GM12878 (cell line): ENCODE measurements at regions of chr22 and their contacts with region 1.

Region 1: GRCh38 chr22:23385291-23386244 is 194.5 kb downstream of the IGLL1 start:
- DNase-seq: peak; percentile 36
- ATAC-seq: peak; percentile 97
- H3K4me3 ChIP-seq: no peak overlapping the region
- H3K27ac ChIP-seq: no peak overlapping the region
- H3K4me1 ChIP-seq: no peaks in the 10 kb centered on the region
- H3K27me3 ChIP-seq: no peaks in the 10 kb centered on the region
- CTCF ChIP-seq: peak; percentile 95 to 97 (median 97); a peak in 5 of 6 replicates
- EP300 ChIP-seq: no peak
- POLR2A ChIP-seq: no peak
- RAD21 ChIP-seq: peak; percentile 96

Region 2: DNA sequence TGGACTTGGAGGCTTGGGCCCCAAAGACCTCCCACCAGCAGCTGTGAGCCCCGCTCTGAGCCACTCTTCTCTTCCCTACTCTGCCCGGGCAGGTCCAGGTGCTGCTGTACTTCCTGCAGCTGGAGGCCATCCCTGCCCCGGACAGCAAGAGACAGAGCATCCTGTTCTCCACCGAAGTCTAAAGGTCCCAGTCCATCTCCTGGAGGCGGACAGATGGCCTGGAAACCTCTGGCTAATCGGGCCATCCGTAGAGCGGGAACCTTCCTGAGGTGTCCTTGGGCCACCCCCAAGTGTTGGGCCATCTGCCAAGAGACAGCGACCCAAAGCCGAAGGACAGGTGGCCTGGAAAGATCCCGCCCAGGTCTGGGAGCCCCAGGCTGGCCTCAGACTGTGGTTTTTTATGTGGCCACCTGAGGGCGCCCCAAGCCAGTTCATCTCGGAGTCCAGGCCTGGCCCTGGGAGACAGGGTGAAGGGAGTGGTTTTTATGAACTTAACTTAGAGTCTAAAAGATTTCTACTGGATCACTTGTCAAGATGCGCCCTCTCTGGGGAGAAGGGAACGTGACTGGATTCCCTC is 70.1 kb before region 1 on chr22:
- CTCF ChIA-PET with region 1: interaction called, 7 read pairs
- POLR2A ChIA-PET with region 1: no interaction called
- RAD21 ChIA-PET with region 1: interaction called, 11 read pairs
- SMC1A ChIA-PET with region 1: no interaction called
- in situ Hi-C with region 1: no loop called
- intact Hi-C with region 1: loop called (anchors 2 kb)
- DNase-seq: no peak
- ATAC-seq: peak; percentile 33; the same call in 1 of the 3 replicates
- H3K4me3 ChIP-seq: no peak overlapping the region
- H3K27ac ChIP-seq: no peak overlapping the region
- H3K4me1 ChIP-seq: no peaks in the 10 kb centered on the region
- H3K27me3 ChIP-seq: no peaks in the 10 kb centered on the region
- CTCF ChIP-seq: peak; percentile 56 to 62 (median 61); a peak in 5 of 6 replicates
- EP300 ChIP-seq: no peak
- POLR2A ChIP-seq: no peak
- RAD21 ChIP-seq: peak; percentile 76

Region 3: DNA sequence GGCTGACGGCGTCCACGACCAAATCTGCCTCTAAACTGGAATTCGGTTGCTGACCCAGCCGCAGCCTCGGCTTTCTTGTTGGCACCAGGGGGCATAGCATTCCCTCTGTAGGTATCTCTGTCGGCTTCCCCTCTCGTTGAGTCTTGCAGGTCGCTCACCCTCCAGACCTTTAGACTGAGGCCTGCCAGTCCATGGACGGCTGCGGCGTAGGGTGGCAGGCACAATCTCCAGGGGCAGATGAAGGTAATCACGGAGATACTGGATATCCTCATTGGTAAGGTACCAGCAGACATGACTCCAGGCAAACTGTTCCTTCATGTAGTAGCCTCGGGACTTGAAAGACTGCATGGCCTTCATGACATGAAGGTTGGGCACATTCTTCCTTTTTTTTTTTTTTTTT is 63.0 kb before region 1 on chr22:
- CTCF ChIA-PET with region 1: interaction called, 12 read pairs
- POLR2A ChIA-PET with region 1: no interaction called
- RAD21 ChIA-PET with region 1: interaction called, 3 read pairs
- SMC1A ChIA-PET with region 1: no interaction called
- in situ Hi-C with region 1: no loop called
- intact Hi-C with region 1: no loop called
- DNase-seq: no peak
- ATAC-seq: no peak
- H3K4me3 ChIP-seq: no peak overlapping the region
- H3K27ac ChIP-seq: no peak overlapping the region
- H3K4me1 ChIP-seq: no peaks in the 10 kb centered on the region
- H3K27me3 ChIP-seq: no peaks in the 10 kb centered on the region
- CTCF ChIP-seq: no peak
- EP300 ChIP-seq: no peak
- POLR2A ChIP-seq: no peak
- RAD21 ChIP-seq: no peak

Region 4: GRCh38 chr22:23368656-23369417 is 16.7 kb before region 1 on chr22:
- CTCF ChIA-PET with region 1: interaction called, 10 read pairs
- POLR2A ChIA-PET with region 1: no interaction called
- RAD21 ChIA-PET with region 1: no interaction called
- SMC1A ChIA-PET with region 1: interaction called, 6 read pairs
- in situ Hi-C with region 1: no loop called
- intact Hi-C with region 1: no loop called
- DNase-seq: no peak
- ATAC-seq: no peak
- H3K4me3 ChIP-seq: no peak overlapping the region
- H3K27ac ChIP-seq: no peak overlapping the region
- H3K4me1 ChIP-seq: no peaks in the 10 kb centered on the region
- H3K27me3 ChIP-seq: no peaks in the 10 kb centered on the region; a peak in 1 of 4 replicates
- CTCF ChIP-seq: no peak
- EP300 ChIP-seq: no peak
- POLR2A ChIP-seq: no peak
- RAD21 ChIP-seq: no peak

Region 5: DNA sequence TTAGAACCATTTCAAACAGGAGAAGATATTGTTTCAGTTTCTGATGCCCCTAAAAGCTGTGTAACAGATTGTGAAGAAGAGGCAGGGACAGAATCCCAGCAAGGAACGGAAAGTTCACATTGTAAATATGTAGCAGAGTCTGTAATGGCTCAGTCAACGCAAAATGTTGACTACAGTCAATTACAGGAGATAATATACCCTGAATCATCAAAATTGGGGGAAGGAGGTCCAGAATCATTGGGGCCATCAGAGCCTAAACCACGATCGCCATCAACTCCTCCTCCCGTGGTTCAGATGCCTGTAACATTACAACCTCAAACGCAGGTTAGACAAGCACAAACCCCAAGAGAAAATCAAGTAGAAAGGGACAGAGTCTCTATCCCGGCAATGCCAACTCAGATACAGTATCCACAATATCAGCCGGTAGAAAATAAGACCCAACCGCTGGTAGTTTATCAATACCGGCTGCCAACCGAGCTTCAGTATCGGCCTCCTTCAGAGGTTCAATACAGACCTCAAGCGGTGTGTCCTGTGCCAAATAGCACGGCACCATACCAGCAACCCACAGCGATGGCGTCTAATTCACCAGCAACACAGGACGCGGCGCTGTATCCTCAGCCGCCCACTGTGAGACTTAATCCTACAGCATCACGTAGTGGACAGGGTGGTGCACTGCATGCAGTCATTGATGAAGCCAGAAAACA is 153.7 kb after region 1 on chr22:
- CTCF ChIA-PET with region 1: interaction called, 5 read pairs
- POLR2A ChIA-PET with region 1: no interaction called
- RAD21 ChIA-PET with region 1: interaction called, 3 read pairs
- SMC1A ChIA-PET with region 1: no interaction called
- in situ Hi-C with region 1: no loop called
- intact Hi-C with region 1: loop called (anchors 1 kb)
- DNase-seq: peak; percentile 36
- ATAC-seq: peak; percentile 100
- H3K4me3 ChIP-seq: no peak overlapping the region
- H3K27ac ChIP-seq: no peak overlapping the region
- H3K4me1 ChIP-seq: no peaks in the 10 kb centered on the region
- H3K27me3 ChIP-seq: peaks cover 0 to 2% of the 10 kb centered on the region in 2 experiments; a peak in 2 of 4 replicates
- CTCF ChIP-seq: peak; percentile 78 to 90 (median 85)
- EP300 ChIP-seq: no peak
- POLR2A ChIP-seq: no peak
- RAD21 ChIP-seq: peak; percentile 86